Natural killer cell (primary cell): ENCODE measurements at regions of chr10 and their contacts with region 1.

Region 1: DNA sequence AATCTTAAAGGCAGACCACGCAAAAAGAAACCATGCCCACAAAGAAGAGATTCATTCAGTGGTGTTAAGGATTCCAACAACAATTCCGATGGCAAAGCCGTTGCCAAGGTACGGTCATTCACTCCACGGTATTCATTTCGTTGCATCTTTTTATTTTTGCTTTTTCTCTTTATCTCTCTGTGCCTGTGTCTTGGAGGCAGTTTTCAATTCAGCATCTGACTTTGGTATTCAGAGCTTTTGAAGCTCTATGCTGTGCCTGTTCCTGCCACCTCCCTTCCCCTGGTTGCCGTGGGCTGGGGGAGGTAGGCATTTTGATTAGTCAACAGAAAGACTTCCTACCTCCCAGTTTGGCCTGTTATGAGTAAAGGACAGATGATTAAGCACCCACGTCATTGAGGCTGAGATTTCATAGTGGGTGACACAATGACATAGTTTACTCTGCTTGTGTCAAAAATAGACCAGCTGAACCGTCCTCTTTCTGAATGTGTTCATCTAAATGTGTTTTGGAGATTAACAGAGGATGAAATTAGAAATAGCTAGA is 149.5 kb downstream of the ARID5B start:
- DNase-seq: peak; percentile 44 to 87
- ATAC-seq: peak; percentile 68 to 83 (median 81)
- H3K4me3 ChIP-seq: no peak overlapping the region
- H3K4me3 Mint-ChIP-seq: peak overlapping the region; percentile 79
- H3K27ac ChIP-seq: peak overlapping the region; percentile 70
- H3K27ac Mint-ChIP-seq: peak overlapping the region; percentile 84 to 89
- H3K4me1 ChIP-seq: peaks cover 50% of the 10 kb centered on the region
- H3K4me1 Mint-ChIP-seq: peaks cover 83 to 98% of the 10 kb centered on the region in 2 donors
- H3K27me3 ChIP-seq: no peaks in the 10 kb centered on the region
- H3K27me3 Mint-ChIP-seq: no peaks in the 10 kb centered on the region
- CTCF ChIP-seq: no peak

Region 2: GRCh38 chr10:61284222-61284890 is 766.6 kb before region 1 on chr10:
- intact Hi-C with region 1: loop called (anchors 5 kb)
- DNase-seq: peak in 1 of 2 donors; percentile 67
- ATAC-seq: peak in 2 of 3 donors; percentile 37 to 50
- H3K4me3 ChIP-seq: no peak overlapping the region
- H3K4me3 Mint-ChIP-seq: peak overlapping the region; percentile 60
- H3K27ac ChIP-seq: no peak overlapping the region
- H3K27ac Mint-ChIP-seq: peak overlapping the region in 1 of 2 donors; percentile 57
- H3K4me1 ChIP-seq: peaks cover 4% of the 10 kb centered on the region
- H3K4me1 Mint-ChIP-seq: peaks cover 31 to 41% of the 10 kb centered on the region in 2 donors
- H3K27me3 ChIP-seq: no peaks in the 10 kb centered on the region
- H3K27me3 Mint-ChIP-seq: no peaks in the 10 kb centered on the region
- CTCF ChIP-seq: peak; percentile 88

Region 3: DNA sequence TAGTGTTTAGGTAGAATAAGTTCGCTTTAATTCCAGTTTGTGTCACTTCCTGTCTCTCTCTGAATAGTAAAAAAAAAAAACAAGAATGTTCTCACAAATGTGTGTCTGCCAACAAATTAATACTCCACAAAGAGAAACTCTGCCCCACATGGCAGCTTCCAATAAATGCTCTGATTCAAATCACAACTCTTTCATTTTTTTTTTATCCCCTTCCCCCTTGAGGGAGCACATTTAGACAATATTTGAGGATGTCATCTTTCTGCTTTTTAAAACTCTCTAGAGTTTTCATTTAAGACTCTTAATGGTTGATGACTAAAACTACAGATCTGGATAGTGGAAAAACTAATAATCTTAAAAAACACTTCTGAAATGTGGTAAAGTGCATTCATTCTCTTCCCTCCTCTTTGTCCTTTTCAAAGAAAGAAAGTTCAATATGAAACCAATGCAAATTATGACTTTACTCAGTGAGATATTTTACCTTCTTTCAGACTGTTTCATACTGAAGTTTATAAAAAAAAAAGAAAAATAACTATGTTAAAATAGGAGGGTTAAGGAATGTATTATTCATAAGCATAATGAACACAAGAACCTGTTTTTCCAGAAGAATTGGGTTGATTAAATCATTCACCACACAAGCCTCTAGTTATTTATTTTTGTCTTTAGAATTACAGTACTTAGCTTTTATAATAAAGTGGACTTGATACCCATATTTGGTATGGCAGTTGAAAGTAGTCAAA is 107.1 kb before region 1 on chr10:
- intact Hi-C with region 1: loop called (anchors 2 kb)
- DNase-seq: peak in 1 of 2 donors; percentile 68
- ATAC-seq: peak; percentile 47 to 66 (median 57)
- H3K4me3 ChIP-seq: peak overlapping the region; percentile 30
- H3K4me3 Mint-ChIP-seq: peak overlapping the region; percentile 86
- H3K27ac ChIP-seq: peak overlapping the region; percentile 93
- H3K27ac Mint-ChIP-seq: peak overlapping the region; percentile 93 to 95
- H3K4me1 ChIP-seq: peaks cover 11% of the 10 kb centered on the region
- H3K4me1 Mint-ChIP-seq: peaks cover 48 to 53% of the 10 kb centered on the region in 2 donors
- H3K27me3 ChIP-seq: no peaks in the 10 kb centered on the region
- H3K27me3 Mint-ChIP-seq: no peaks in the 10 kb centered on the region
- CTCF ChIP-seq: peak; percentile 22

Region 4: DNA sequence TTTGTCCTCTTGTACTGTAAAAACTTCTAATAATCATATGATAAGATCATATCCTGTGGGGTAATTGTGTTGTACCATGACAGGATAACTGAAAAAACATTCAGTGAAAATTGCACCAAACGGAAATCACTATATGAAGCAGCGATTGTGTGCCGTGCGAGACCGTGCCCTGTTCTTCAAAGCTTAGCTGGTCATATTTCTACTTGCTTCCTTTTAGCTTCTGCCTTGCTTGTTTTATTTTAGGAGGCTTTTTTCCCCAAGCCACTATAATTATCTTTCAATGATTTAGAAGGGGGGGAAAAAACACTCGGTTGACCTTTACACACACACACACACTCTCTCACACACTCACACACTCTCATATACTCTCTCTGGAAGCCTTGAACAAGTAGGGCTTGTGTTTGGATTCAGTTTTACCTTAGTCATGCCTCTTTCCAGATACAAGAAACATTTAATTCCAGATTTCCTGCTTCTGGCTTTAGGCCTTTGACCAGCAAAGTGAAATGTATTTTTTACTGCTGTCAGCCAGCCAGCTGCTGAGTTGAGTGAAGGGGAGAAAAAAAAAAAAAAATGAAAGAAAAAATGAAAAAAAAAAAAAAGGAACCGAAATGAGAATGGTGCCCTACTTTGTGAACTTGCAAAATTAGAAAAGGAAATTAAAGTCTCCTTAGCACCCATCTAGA is 31.9 kb after region 1 on chr10:
- intact Hi-C with region 1: loop called (anchors 2 kb)
- DNase-seq: peak in 1 of 2 donors; percentile 74
- ATAC-seq: peak; percentile 82 to 86 (median 83)
- H3K4me3 ChIP-seq: no peak overlapping the region
- H3K4me3 Mint-ChIP-seq: peak overlapping the region; percentile 67
- H3K27ac ChIP-seq: peak overlapping the region; percentile 67
- H3K27ac Mint-ChIP-seq: peak overlapping the region; percentile 73 to 87
- H3K4me1 ChIP-seq: peaks cover 13% of the 10 kb centered on the region
- H3K4me1 Mint-ChIP-seq: peaks cover 35 to 45% of the 10 kb centered on the region in 2 donors
- H3K27me3 ChIP-seq: no peaks in the 10 kb centered on the region
- H3K27me3 Mint-ChIP-seq: no peaks in the 10 kb centered on the region
- CTCF ChIP-seq: no peak

Region 5: GRCh38 chr10:62231371-62231770 is 180.4 kb after region 1 on chr10:
- intact Hi-C with region 1: no loop called
- DNase-seq: no peak
- ATAC-seq: no peak
- H3K4me3 ChIP-seq: no peak overlapping the region
- H3K4me3 Mint-ChIP-seq: no peak overlapping the region
- H3K27ac ChIP-seq: no peak overlapping the region
- H3K27ac Mint-ChIP-seq: no peak overlapping the region
- H3K4me1 ChIP-seq: no peaks in the 10 kb centered on the region
- H3K4me1 Mint-ChIP-seq: no peaks in the 10 kb centered on the region
- H3K27me3 ChIP-seq: no peaks in the 10 kb centered on the region
- H3K27me3 Mint-ChIP-seq: no peaks in the 10 kb centered on the region
- CTCF ChIP-seq: no peak

Region 6: GRCh38 chr10:62384057-62384446 is 333.1 kb after region 1 on chr10:
- intact Hi-C with region 1: loop called (anchors 5 kb)
- DNase-seq: peak; percentile 58 to 83
- ATAC-seq: peak; percentile 94 to 99 (median 96)
- H3K4me3 ChIP-seq: no peak overlapping the region
- H3K4me3 Mint-ChIP-seq: peak overlapping the region; percentile 82
- H3K27ac ChIP-seq: peak overlapping the region; percentile 62
- H3K27ac Mint-ChIP-seq: peak overlapping the region; percentile 75 to 80
- H3K4me1 ChIP-seq: peaks cover 9% of the 10 kb centered on the region
- H3K4me1 Mint-ChIP-seq: peaks cover 61 to 66% of the 10 kb centered on the region in 2 donors
- H3K27me3 ChIP-seq: no peaks in the 10 kb centered on the region
- H3K27me3 Mint-ChIP-seq: peaks cover 2 to 13% of the 10 kb centered on the region in 2 donors
- CTCF ChIP-seq: no peak